Panc1 (cell line): ENCODE measurements at regions of chr15 and their contacts with region 1.

Region 1: GRCh38 chr15:40928821-40929659 is at the start of gene DLL4:
- DNase-seq: no peak
- ATAC-seq: peak; percentile 72
- H3K4me3 ChIP-seq: peak within 1 kb of the TSS; percentile 48 to 67
- H3K27ac ChIP-seq: no peak within 1 kb of the TSS
- H3K4me1 ChIP-seq: peaks cover 12% of the 10 kb centered on the region; the same call in 1 of the 2 replicates
- H3K27me3 ChIP-seq: peaks cover 3% of the 10 kb centered on the region; the same call in 1 of the 2 replicates
- CTCF ChIP-seq: no peak
- total RNA-seq, gene DLL4: 0.31 TPM

Region 2: DNA sequence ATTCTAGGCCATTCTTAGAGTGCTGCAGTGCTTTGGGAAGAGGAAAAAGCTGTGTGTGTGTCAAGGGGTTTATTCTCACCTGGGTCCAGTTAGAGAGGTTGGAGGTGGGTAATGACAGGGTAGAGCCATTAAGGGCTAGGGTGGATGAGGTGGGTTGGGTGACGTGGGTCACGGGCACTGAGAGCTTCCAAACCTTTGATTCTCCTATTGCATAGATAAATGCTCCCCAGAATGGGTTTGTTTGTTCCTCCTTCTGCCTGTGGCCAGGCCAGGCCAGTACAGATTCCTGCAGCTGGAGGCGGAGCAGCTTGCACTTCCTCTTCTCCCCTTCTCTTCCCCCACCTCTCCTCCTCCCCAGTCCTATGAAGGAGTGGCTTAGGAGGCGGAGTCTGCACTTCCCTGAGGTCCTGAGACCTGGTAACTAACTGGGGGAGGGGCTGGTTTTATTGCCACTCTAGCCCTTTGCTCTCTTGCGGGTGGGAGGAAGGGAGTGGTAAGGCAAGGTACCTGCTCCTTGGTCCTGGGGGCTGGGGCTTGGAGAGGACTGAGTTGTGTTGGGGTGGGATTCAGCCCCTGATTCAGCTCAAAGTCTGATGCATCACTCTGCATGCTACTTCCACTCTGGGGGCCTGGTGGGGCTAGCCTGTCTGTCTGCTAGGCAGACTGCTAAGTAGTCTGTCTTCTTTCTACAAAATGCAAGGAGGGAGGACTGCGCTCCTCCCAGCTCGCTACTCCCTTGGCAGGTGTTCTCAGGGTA is 81.7 kb before region 1 on chr15:
- CTCF ChIA-PET with region 1: no interaction called
- POLR2A ChIA-PET with region 1: interaction called, 10 read pairs
- in situ Hi-C with region 1: no loop called
- intact Hi-C with region 1: no loop called
- DNase-seq: no peak
- ATAC-seq: peak; percentile 42
- H3K4me3 ChIP-seq: no peak overlapping the region
- H3K27ac ChIP-seq: no peak overlapping the region
- H3K4me1 ChIP-seq: peaks cover 3% of the 10 kb centered on the region; the same call in 1 of the 2 replicates
- H3K27me3 ChIP-seq: no peaks in the 10 kb centered on the region
- CTCF ChIP-seq: no peak

Region 3: DNA sequence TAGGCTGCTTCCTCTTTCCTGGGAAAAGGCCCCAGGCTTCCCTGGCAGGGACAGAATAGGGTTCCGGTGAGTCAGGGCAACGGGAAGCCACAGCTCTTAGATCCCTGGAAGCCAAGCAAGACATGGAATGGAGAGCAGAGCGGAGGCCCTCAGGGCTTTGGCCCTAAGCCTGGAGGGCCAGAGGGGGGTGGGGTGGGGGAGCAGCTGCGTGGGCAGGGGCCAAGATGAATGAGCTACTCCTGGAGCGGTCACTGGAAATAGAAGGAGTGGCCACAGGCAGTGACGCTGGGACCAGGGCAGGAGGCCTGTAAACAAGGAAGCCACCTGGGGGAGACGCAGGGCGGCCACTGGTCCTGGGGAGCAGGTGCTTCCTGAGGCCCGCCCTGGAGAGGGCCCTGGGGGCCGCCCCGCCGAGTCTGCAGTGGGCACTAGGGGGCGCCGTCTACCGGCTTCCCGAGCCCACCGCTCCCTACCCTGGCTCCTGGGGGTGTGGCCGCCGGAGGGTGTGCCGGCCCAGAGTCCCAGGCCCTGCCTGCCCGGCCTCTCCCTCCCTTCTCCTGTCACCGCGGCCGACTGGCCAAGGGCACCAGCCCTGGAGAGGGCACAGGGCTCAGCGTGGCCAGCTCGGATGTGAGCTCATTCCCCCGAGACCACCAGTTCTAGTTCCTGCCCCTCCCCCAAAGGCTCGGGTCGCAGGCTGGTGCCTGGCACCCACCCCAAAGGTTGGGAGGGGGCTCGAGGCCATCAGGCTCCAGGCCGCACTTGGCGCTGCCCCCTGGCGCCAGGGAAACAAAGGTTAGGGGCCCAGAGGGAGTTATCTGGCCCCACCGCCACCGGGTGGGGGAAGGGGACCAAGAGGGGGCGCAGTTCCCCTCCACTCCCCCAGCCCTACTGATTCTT is 22.7 kb before region 1 on chr15:
- CTCF ChIA-PET with region 1: interaction called, 11 read pairs
- POLR2A ChIA-PET with region 1: no interaction called
- in situ Hi-C with region 1: no loop called
- intact Hi-C with region 1: no loop called
- DNase-seq: no peak
- ATAC-seq: peak; percentile 82
- H3K4me3 ChIP-seq: peak overlapping the region; percentile 41 to 63
- H3K27ac ChIP-seq: peak overlapping the region; percentile 83
- H3K4me1 ChIP-seq: peaks cover 24% of the 10 kb centered on the region
- H3K27me3 ChIP-seq: no peaks in the 10 kb centered on the region
- CTCF ChIP-seq: peak; percentile 92

Region 4: GRCh38 chr15:41022487-41023090 is 93.5 kb after region 1 on chr15:
- CTCF ChIA-PET with region 1: no interaction called
- POLR2A ChIA-PET with region 1: interaction called, 10 read pairs
- in situ Hi-C with region 1: no loop called
- intact Hi-C with region 1: no loop called
- DNase-seq: peak; percentile 56
- ATAC-seq: peak; percentile 89
- H3K4me3 ChIP-seq: no peak overlapping the region
- H3K27ac ChIP-seq: no peak overlapping the region
- H3K4me1 ChIP-seq: no peaks in the 10 kb centered on the region
- H3K27me3 ChIP-seq: no peaks in the 10 kb centered on the region
- CTCF ChIP-seq: peak; percentile 80

Region 5: DNA sequence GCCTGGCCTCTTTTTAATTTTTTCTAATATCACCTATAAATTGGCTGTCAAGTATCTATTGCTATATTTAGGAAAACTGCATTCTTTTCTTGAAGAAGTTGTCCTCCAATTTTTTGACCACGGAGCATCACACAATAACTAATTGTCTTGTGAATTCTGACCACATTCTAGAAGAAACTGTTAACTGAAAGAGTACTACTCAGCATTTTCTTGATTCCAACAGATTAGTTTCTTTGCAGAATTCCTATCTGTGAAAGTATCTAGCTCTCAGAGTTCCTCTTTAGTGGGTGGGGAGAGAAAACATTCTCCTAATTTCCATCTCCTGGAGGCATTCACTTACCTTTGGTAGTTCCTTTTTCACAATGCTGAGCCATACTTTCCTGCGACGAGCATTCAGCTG is 156.0 kb after region 1 on chr15:
- CTCF ChIA-PET with region 1: no interaction called
- POLR2A ChIA-PET with region 1: no interaction called
- in situ Hi-C with region 1: no loop called
- intact Hi-C with region 1: no loop called
- DNase-seq: no peak
- ATAC-seq: no peak
- H3K4me3 ChIP-seq: no peak overlapping the region
- H3K27ac ChIP-seq: no peak overlapping the region
- H3K4me1 ChIP-seq: no peaks in the 10 kb centered on the region
- H3K27me3 ChIP-seq: no peaks in the 10 kb centered on the region
- CTCF ChIP-seq: no peak

Region 6: GRCh38 chr15:41230650-41231533 is 301.9 kb after region 1 on chr15 and contains the starts of genes CHP1 and EXD1:
- CTCF ChIA-PET with region 1: interaction called, 10 read pairs
- POLR2A ChIA-PET with region 1: no interaction called
- in situ Hi-C with region 1: no loop called
- intact Hi-C with region 1: no loop called
- DNase-seq: peak; percentile 89
- ATAC-seq: peak; percentile 100
- H3K4me3 ChIP-seq: peak within 1 kb of the TSS; percentile 90 to 99
- H3K27ac ChIP-seq: peak within 1 kb of the TSS; percentile 89
- H3K4me1 ChIP-seq: peaks cover 12% of the 10 kb centered on the region
- H3K27me3 ChIP-seq: no peaks in the 10 kb centered on the region
- CTCF ChIP-seq: peak; percentile 100
- total RNA-seq, gene CHP1: 123 TPM
- total RNA-seq, gene EXD1: 0.15 TPM